Posterior vena cava (tissue), 2 donors: ENCODE measurements at regions of chr4 and their contacts with region 1.

Region 1: DNA sequence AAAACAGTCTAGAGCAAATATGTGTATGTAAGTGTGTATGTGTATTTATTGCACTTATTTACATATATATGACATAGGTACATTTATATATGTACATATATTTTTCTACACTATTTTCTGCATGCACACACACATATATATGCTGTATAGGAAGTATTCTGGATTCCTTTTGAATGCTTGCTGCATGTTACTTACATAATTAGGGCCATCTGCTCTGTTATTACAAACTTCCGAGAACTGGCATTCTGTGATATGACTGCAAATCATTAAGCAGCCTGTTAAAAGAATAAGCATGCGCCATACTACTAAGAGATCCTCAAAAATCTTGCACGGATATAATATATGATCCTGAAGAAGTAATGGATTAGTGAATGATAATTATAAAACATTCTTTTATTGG is 1157.6 kb upstream of the TENM3 start:
- DNase-seq: no peak

Region 2: DNA sequence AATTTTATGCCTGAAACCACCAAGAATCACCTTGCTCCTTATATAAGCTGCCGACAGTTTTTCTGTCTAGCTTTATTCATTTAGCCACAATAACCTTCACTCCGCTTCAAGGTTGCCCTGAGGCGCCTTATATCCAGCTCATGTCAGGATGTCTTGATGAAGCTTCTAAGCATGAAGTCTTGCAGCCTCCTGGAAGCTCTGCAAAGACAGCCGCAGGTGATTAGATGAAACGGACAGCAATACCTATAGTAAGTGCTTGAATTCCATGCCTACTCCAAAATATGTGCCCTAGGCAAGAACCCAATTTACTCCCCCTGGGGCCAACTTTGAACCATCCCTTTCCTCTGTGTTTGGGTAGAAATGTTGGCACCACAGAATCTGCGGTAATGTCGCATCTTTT is 10.4 kb before region 1 on chr4:
- intact Hi-C with region 1: loop called in 1 of 2 experiments (anchors 1 kb)
- DNase-seq: no peak

Region 3: GRCh38 chr4:181597766-181598165 is 512.2 kb after region 1 on chr4:
- intact Hi-C with region 1: no loop called
- DNase-seq: no peak